ENCODE measurements at regions of chr18 and their contacts with region 1.

Region 1: DNA sequence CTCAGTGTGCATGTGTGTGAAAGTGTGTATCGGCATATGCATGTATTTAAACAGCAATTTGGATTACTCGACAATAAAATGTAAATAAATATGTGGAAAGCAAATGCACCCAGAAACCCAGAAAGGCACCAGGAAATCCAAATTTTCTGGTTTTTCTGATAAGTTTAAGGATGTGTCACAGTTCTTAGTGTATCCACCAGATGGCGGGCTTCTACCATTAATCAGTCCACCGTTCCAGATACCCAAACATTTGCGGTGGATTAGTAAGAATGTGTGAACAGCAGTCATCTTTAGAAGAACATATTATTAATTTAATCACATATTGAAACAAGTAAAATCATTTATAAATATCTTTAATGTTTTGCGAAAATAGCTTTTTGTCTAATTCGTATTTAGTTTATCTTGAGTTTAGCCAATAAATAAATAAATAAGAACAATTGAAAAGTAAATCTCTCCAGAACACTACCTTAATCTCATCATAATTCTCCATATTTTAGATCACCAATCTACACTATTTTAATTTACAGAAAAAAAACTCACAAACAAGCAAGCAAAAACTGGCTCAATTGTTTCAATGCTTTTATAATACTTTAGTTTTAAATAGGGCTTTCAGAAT is 298.9 kb downstream of the DSEL start:
- DNase-seq: peak; percentile 72
- ATAC-seq: peak; percentile 82
- H3K4me3 Mint-ChIP-seq: no peak overlapping the region
- H3K27ac Mint-ChIP-seq: no peak overlapping the region
- H3K4me1 Mint-ChIP-seq: no peaks in the 10 kb centered on the region
- H3K27me3 Mint-ChIP-seq: no peaks in the 10 kb centered on the region
- CTCF ChIP-seq: peak; percentile 85

Region 2: GRCh38 chr18:66523219-66523991 is 694.3 kb before region 1 on chr18:
- CTCF ChIA-PET with region 1: no interaction called
- POLR2A ChIA-PET with region 1: no interaction called
- intact Hi-C with region 1: no loop called
- DNase-seq: no peak
- ATAC-seq: no peak
- H3K4me3 Mint-ChIP-seq: no peak overlapping the region
- H3K27ac Mint-ChIP-seq: no peak overlapping the region
- H3K4me1 Mint-ChIP-seq: no peaks in the 10 kb centered on the region
- H3K27me3 Mint-ChIP-seq: no peaks in the 10 kb centered on the region
- CTCF ChIP-seq: no peak

Region 3: GRCh38 chr18:67515945-67516538 is 298.4 kb after region 1 on chr18:
- CTCF ChIA-PET with region 1: interaction called, 3 read pairs
- POLR2A ChIA-PET with region 1: no interaction called
- intact Hi-C with region 1: loop called (anchors 10 kb)
- DNase-seq: peak; percentile 75
- ATAC-seq: peak; percentile 18
- H3K4me3 Mint-ChIP-seq: peak overlapping the region; percentile 92
- H3K27ac Mint-ChIP-seq: no peak overlapping the region
- H3K4me1 Mint-ChIP-seq: peaks cover 13% of the 10 kb centered on the region
- H3K27me3 Mint-ChIP-seq: peaks cover 7% of the 10 kb centered on the region
- CTCF ChIP-seq: peak; percentile 56

Region 4: GRCh38 chr18:68660354-68661183 is 1442.9 kb after region 1 on chr18:
- CTCF ChIA-PET with region 1: interaction called, 5 read pairs
- POLR2A ChIA-PET with region 1: no interaction called
- intact Hi-C with region 1: loop called (anchors 5 kb)
- DNase-seq: no peak
- ATAC-seq: no peak
- H3K4me3 Mint-ChIP-seq: no peak overlapping the region
- H3K27ac Mint-ChIP-seq: no peak overlapping the region
- H3K4me1 Mint-ChIP-seq: no peaks in the 10 kb centered on the region
- H3K27me3 Mint-ChIP-seq: peaks cover 2% of the 10 kb centered on the region
- CTCF ChIP-seq: peak; percentile 70

Measured in activated CD8-positive, alpha-beta T cell treated with anti-CD3 and anti-CD28 coated beads for 36 hours (primary cell).